Sigmoid colon (tissue), 7 donors: ENCODE measurements at regions of chr12 and their contacts with region 1.

Region 1: DNA sequence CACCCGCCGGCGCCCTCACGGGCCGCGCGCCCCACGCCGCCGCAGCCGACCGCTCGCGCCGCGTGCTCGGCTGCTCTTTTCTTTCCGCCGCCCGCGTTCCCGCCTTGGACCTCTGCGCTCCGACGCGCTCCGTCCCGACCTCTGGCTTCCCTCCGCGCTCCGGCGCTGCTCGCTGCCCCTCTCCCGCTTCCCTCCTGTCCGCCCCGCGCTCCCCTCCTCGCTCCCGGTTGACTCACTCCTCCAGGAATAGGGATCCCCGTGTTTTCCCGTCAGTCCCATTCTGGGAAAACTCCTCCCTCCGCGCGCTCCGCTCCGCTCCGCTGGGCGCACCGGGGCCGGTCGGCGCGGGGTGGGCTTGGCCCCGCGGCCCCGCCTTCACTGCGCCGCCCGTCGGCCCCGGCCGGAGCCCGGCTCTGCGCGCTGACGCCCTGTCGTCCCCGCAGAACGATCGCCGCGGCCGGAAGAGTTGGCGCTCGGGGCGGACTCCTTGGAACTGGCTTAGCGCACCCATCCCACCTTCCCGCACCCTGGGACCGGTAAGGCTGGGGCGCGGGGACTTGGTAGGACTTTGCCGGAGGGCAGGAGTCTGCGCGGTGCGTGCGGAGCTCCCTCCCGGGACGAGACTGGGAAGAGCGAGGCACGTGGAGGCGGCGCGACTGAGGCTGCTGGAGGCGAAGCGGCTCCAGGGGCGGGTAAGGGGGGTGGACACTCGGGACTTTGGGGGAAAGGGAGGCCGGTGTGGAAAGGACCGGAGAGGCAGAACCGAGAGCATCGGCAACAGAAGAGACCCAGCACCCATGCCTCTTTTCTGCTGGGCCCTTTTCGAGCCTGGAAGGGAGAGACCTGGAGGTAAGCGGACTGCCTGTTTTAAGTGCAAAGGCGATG is 550 bp downstream of the TEAD4 start:
- DNase-seq: peak; percentile 77
- H3K4me3 ChIP-seq: peak overlapping the region; percentile 37 to 69 (median 59)
- H3K27ac ChIP-seq: peak overlapping the region; percentile 68 to 91 (median 82)
- H3K4me1 ChIP-seq: peaks cover 0 to 28% (median 24%) of the 10 kb centered on the region in 4 donors
- H3K27me3 ChIP-seq: no peaks in the 10 kb centered on the region
- CTCF ChIP-seq: no peak
- EP300 ChIP-seq: no peak
- POLR2A ChIP-seq: no peak

Region 2: GRCh38 chr12:3034067-3034750 is 74.5 kb after region 1 on chr12:
- intact Hi-C with region 1: loop called (anchors 5 kb)
- DNase-seq: peak; percentile 76
- H3K4me3 ChIP-seq: no peak overlapping the region
- H3K27ac ChIP-seq: no peak overlapping the region
- H3K4me1 ChIP-seq: peaks cover 0 to 17% (median 4%) of the 10 kb centered on the region in 4 donors
- H3K27me3 ChIP-seq: no peaks in the 10 kb centered on the region
- CTCF ChIP-seq: peak; percentile 48 to 78 (median 66)
- EP300 ChIP-seq: no peak
- POLR2A ChIP-seq: no peak